ENCODE measurements at regions of chr4 and their contacts with region 1.

Region 1: DNA sequence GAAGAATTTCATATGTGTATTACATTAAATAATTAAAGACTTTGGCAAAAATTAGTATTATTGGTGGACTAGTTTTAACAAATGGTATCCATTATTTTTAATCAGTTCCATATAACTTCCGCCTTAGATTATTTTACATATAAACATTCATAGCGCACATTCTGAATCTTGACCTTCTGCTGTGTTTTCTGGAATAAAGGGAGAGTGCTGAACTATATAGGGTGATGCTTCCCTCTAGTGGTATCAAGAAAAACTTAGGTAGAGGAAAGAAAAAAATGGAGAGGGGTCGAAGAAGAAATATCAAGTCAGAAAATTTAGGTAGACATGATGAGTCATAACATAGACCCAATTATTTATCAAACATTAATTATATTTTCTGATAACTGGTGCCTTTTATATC is 155.6 kb upstream of the PACRGL start:
- DNase-seq: peak; percentile 56
- H3K4me3 Mint-ChIP-seq: no peak overlapping the region
- H3K27ac Mint-ChIP-seq: no peak overlapping the region
- H3K4me1 Mint-ChIP-seq: no peaks in the 10 kb centered on the region
- H3K27me3 Mint-ChIP-seq: no peaks in the 10 kb centered on the region
- CTCF ChIP-seq: peak; percentile 52

Region 2: GRCh38 chr4:19224820-19225219 is 1319.8 kb before region 1 on chr4:
- CTCF ChIA-PET with region 1: no interaction called
- POLR2A ChIA-PET with region 1: no interaction called
- intact Hi-C with region 1: loop called (anchors 10 kb)
- DNase-seq: peak; percentile 27
- H3K4me3 Mint-ChIP-seq: no peak overlapping the region
- H3K27ac Mint-ChIP-seq: no peak overlapping the region
- H3K4me1 Mint-ChIP-seq: peaks cover 7% of the 10 kb centered on the region
- H3K27me3 Mint-ChIP-seq: no peaks in the 10 kb centered on the region
- CTCF ChIP-seq: peak; percentile 26

Region 3: GRCh38 chr4:19309378-19309777 is 1235.3 kb before region 1 on chr4:
- CTCF ChIA-PET with region 1: no interaction called
- POLR2A ChIA-PET with region 1: no interaction called
- intact Hi-C with region 1: loop called (anchors 5 kb)
- DNase-seq: peak; percentile 44
- H3K4me3 Mint-ChIP-seq: no peak overlapping the region
- H3K27ac Mint-ChIP-seq: no peak overlapping the region
- H3K4me1 Mint-ChIP-seq: peaks cover 8% of the 10 kb centered on the region
- H3K27me3 Mint-ChIP-seq: no peaks in the 10 kb centered on the region
- CTCF ChIP-seq: peak; percentile 58

Region 4: GRCh38 chr4:21134994-21135393 is 590.3 kb after region 1 on chr4:
- CTCF ChIA-PET with region 1: interaction called, 3 read pairs
- POLR2A ChIA-PET with region 1: no interaction called
- intact Hi-C with region 1: loop called (anchors 10 kb)
- DNase-seq: peak; percentile 54
- H3K4me3 Mint-ChIP-seq: no peak overlapping the region
- H3K27ac Mint-ChIP-seq: no peak overlapping the region
- H3K4me1 Mint-ChIP-seq: no peaks in the 10 kb centered on the region
- H3K27me3 Mint-ChIP-seq: no peaks in the 10 kb centered on the region
- CTCF ChIP-seq: peak; percentile 52